ENCODE measurements at regions of chr9 and their contacts with region 1.

Region 1: GRCh38 chr9:95875305-95876137 is at the start of gene ERCC6L2:
- DNase-seq: peak; percentile 96
- H3K4me3 Mint-ChIP-seq: no peak within 1 kb of the TSS
- H3K27ac Mint-ChIP-seq: no peak within 1 kb of the TSS
- H3K4me1 Mint-ChIP-seq: peaks cover 24% of the 10 kb centered on the region
- H3K27me3 Mint-ChIP-seq: no peaks in the 10 kb centered on the region
- total RNA-seq, gene ERCC6L2: 20.3 to 20.6 TPM

Region 2: DNA sequence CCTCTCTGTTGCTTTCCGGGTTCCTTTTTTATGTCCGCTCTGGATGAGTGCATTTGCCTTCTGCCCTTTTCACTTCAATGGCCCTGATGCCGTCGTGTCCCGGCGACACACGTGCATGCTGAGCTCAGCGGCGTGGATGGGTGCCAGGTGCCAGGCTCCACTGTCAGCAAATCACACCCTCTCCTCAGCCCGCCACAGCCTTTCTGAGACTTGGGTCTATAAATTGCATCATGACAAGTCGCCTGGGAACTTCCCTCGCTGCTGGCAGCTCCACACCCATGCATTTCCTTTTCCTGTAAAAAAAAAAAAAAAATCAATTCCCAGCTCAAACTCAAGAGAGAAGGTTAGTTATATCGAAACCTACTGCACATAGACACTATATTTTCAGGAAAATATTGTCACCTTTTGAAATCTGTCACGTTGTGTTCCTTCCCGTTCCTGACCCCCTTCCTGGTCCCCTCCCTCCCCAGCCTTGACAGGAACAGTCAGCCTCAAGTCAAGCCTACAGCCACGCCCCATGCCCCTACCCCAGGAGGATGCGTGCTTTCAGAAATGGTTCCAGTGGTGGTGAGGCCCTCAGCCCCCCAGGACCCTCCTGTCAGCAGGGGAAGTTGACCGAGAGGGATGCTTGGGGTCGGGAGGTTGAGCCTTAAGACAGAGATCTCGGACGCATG is 248.5 kb before region 1 on chr9:
- CTCF ChIA-PET with region 1: no interaction called
- intact Hi-C with region 1: loop called (anchors 1 kb)
- DNase-seq: peak; percentile 91
- H3K4me3 Mint-ChIP-seq: no peak overlapping the region
- H3K27ac Mint-ChIP-seq: peak overlapping the region; percentile 97
- H3K4me1 Mint-ChIP-seq: peaks cover 31% of the 10 kb centered on the region
- H3K27me3 Mint-ChIP-seq: no peaks in the 10 kb centered on the region

Region 3: DNA sequence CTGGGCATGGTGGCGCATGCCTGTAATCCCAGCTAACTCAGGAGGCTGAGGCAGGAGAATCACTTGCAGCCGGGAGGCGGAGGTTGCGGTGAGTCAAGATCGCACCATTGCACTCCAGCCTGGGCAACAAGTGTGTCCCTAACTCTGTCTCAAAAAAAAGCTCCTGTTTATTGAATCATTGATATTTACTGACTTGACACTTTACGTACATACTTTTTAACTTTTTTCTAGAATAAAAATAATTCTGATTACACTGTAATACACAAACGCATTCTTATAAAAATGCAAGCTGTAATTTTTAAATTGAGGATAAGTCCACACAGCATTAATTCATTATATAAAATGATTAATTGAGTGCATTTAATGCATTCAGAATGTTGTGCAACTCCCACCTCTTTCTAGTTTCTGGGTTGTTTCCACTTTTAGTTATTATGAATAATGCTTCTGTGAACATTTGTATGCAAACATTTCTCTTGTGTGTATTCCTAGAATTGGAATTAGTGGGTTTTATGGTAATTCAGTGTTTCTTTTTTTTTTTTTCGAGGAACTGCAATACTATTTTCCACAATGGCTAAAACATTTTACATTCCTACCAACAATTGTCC is 15.6 kb after region 1 on chr9:
- CTCF ChIA-PET with region 1: interaction called, 3 read pairs
- intact Hi-C with region 1: loop called (anchors 2 kb)
- DNase-seq: no peak
- H3K4me3 Mint-ChIP-seq: no peak overlapping the region
- H3K27ac Mint-ChIP-seq: no peak overlapping the region
- H3K4me1 Mint-ChIP-seq: peaks cover 52% of the 10 kb centered on the region
- H3K27me3 Mint-ChIP-seq: no peaks in the 10 kb centered on the region

Region 4: GRCh38 chr9:95953986-95954385 is 78.5 kb after region 1 on chr9:
- CTCF ChIA-PET with region 1: interaction called, 3 read pairs
- intact Hi-C with region 1: loop called (anchors 5 kb)
- DNase-seq: no peak
- H3K4me3 Mint-ChIP-seq: no peak overlapping the region
- H3K27ac Mint-ChIP-seq: peak overlapping the region; percentile 64
- H3K4me1 Mint-ChIP-seq: peaks cover 18% of the 10 kb centered on the region
- H3K27me3 Mint-ChIP-seq: no peaks in the 10 kb centered on the region

Region 5: DNA sequence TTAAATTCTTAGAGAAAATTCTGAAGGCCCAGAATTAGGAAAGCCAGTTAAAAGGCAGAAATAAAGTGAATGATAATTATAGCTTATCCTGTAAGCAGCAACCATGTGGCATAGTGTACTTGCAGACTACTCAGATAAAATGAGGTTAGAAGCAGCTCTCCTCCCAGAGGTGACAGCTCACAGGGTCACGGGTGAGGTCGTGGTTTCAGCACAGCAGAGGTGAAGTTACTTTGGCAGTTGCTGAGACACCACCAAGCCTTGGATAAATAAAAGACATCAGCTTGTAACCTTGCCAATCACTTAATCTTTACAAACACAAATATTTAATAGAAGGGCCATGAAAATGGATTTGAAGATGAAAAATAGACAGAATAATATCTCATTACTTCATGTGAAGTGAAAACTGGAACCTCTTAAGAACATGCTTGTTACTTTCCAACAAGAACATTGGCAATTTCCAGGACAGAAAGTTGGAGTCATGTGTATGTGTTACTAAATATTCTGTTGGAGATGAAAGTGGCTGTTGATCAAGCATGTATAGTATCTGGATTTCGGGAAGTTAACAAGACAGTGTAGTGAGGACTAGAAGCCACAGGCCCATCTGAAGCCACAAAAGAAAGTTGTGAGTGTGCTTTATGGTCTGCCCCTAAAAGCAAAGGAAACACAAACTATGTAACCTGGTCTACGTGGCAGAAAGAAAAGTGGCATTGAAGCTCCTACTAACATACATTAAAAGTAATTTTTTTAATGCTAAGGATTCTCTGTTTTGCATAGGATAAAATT is 134.4 kb after region 1 on chr9:
- CTCF ChIA-PET with region 1: interaction called, 3 read pairs
- intact Hi-C with region 1: loop called (anchors 2 kb)
- DNase-seq: peak; percentile 83
- H3K4me3 Mint-ChIP-seq: no peak overlapping the region
- H3K27ac Mint-ChIP-seq: peak overlapping the region; percentile 73
- H3K4me1 Mint-ChIP-seq: peaks cover 54% of the 10 kb centered on the region
- H3K27me3 Mint-ChIP-seq: no peaks in the 10 kb centered on the region